Endothelial cell of umbilical vein (primary cell): ENCODE measurements at regions of chr2 and their contacts with region 1.

Region 1: DNA sequence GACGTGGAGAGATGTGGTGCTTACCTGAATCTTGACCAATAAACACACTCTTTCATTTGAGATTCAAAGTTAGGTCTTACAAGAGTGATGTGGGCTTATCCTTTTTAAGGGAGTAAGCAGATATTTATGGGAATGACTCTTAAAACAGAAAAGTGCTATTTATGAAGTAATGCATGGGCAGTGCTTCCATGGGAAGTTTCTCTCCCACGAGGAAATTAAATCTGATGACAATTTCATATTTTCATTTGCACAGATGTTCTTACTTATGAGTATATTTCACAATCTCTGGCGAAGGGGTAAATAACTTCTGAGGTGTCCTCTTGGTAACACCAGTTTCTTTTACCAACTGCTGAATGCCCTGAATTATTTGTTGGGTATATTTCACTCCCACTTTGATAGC is 21.0 kb downstream of the PNPT1 start:
- DNase-seq: no peak
- H3K4me3 ChIP-seq: no peak overlapping the region
- H3K27ac ChIP-seq: no peak overlapping the region
- H3K4me1 ChIP-seq: no peaks in the 10 kb centered on the region
- H3K27me3 ChIP-seq: no peaks in the 10 kb centered on the region
- CTCF ChIP-seq: no peak
- POLR2A ChIP-seq: no peak

Region 2: DNA sequence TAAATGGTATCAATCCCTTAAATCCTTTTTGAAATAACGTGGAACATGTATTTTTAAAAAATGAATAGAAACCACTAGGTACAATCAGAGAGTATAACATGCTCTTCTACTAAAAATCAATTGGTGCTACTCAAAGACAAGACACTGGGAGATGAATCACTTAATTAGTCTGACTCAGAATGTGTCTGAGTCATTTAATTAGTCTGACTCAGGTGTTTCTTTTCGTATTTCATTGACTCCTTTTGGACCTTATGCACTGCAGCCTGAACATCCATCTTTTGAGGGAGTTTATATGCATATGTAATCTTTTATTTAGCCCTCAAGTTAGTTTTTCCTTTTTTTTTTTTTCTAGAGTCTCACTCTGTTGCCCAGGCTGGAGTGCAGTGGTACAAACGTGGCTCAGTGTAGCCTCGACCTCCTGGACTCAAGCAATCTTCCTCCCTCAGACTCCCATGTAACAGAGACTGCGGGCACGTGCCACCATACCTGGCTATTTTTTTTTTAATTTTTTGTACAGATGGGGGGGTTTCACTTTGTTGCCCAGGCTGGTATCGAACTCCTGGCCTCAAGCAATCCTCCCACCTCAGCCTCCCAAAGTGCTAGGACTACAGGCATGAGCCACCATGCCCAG is 81.7 kb before region 1 on chr2:
- CTCF ChIA-PET with region 1: no interaction called
- POLR2A ChIA-PET with region 1: no interaction called
- dilution Hi-C with region 1: no loop called
- intact Hi-C with region 1: no loop called
- DNase-seq: no peak
- H3K4me3 ChIP-seq: no peak overlapping the region
- H3K27ac ChIP-seq: no peak overlapping the region
- H3K4me1 ChIP-seq: peaks cover 8% of the 10 kb centered on the region
- H3K27me3 ChIP-seq: no peaks in the 10 kb centered on the region
- CTCF ChIP-seq: no peak
- POLR2A ChIP-seq: no peak

Region 3: DNA sequence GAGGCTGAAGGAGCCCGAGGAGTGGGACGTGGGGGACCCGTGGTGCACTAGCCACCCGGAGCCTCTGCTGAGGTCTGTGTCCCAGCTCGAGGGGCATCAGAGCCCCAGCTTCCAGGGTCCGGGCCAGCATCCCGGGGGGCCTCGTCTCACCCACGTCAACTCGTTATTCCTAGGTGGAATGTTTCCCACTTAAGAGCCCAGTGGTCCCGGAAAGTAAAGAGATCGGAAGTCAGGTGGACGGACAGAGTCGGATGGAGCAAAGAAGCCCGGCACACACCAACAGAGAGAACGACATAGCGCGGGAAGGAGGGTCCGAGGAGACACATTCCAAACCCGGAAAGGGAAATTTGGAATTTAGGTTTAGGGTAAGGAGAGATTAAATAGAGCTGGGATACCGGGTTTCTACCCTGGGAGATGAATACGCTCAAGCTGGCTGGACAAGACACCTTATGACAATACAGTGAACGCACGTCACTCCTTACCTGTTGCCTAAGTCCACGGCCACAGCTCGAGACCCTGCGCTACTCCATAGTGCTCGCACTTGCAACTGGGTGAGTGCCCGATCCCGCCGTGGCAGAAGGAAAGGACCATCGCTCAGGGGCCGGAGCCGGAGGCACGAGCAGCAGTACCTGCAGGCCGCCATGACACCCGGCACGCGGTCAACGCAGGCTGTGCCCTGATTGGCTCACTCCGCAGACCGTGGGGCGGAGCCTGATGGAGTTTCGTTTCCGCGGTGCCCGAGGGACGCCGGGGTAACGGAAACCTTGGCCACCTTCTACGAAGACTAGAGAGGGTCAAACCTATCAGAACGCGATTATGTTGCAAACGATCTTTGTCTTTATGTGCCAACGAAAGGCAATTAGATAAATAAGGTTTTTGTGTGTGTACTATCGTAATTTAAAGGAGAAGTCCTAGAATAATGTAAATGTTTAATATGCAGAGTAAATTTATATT is 20.8 kb after region 1 on chr2 and contains the start of gene PNPT1:
- CTCF ChIA-PET with region 1: no interaction called
- POLR2A ChIA-PET with region 1: no interaction called
- dilution Hi-C with region 1: no loop called
- intact Hi-C with region 1: no loop called
- DNase-seq: peak; percentile 94
- H3K4me3 ChIP-seq: peak within 1 kb of the TSS; percentile 49 to 83 (median 51)
- H3K27ac ChIP-seq: peak within 1 kb of the TSS; percentile 21
- H3K4me1 ChIP-seq: peaks cover 8% of the 10 kb centered on the region
- H3K27me3 ChIP-seq: peaks cover 2 to 4% of the 10 kb centered on the region in 2 experiments
- CTCF ChIP-seq: no peak
- POLR2A ChIP-seq: peak; percentile 85
- total RNA-seq, gene PNPT1: 32.4 and 34.2 TPM in 2 replicates

Region 4: DNA sequence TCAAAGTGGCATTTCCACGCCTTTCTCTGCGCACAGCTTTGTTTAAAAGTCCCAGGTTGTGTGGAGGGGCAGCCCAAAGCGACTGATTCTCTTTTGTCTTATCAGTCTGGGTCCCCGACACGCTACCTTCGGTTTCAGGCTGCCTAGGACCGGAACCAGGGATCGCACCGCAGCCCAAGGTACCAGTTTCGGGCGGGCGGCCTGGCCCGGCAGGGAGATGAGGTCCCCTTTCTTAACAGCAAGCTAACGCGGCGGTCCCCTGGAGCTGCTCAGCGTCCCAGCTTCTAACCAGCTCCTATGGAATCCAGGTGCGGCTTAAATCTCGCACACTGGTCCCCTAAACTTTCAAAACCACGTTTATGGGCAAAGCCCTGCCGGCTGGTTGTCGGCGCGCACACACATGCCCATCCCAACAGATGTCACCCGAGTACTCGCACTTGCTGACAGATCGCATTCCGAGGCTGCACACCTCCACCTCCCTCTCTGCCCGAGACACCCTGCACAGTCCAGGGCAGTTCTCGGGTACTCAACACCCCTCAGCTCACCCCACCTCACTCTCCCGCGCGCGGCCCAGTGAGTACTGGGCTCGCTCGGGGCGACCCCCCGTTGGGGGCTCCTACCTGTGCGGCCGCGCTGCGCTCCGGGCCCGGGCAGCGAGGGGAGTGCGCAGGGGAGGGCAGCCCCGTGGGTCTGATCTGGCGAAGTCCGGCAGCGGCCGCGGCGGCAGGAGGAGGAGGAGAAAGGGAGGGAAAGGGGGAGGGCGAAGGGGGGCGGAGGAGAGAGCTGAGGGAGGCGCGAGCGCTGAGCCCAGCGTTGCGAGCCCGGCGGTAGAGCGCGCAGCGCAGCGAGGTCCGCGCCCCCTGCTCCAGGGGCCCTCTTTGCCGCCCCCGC is 250.7 kb after region 1 on chr2 and contains the start of gene EFEMP1:
- CTCF ChIA-PET with region 1: no interaction called
- POLR2A ChIA-PET with region 1: no interaction called
- dilution Hi-C with region 1: no loop called
- intact Hi-C with region 1: no loop called
- DNase-seq: peak; percentile 87
- H3K4me3 ChIP-seq: peak within 1 kb of the TSS; percentile 57 to 97 (median 91)
- H3K27ac ChIP-seq: peak within 1 kb of the TSS; percentile 82
- H3K4me1 ChIP-seq: peaks cover 43% of the 10 kb centered on the region
- H3K27me3 ChIP-seq: no peaks in the 10 kb centered on the region
- CTCF ChIP-seq: peak in 1 of 2 donors; percentile 4
- POLR2A ChIP-seq: peak; percentile 96
- total RNA-seq, gene EFEMP1: 2,354 and 2,981 TPM in 2 replicates

Region 5: GRCh38 chr2:55976681-55977080 is 304.1 kb after region 1 on chr2:
- CTCF ChIA-PET with region 1: no interaction called
- POLR2A ChIA-PET with region 1: interaction called, 10 read pairs
- dilution Hi-C with region 1: no loop called
- intact Hi-C with region 1: no loop called
- DNase-seq: no peak
- H3K4me3 ChIP-seq: no peak overlapping the region
- H3K27ac ChIP-seq: no peak overlapping the region
- H3K4me1 ChIP-seq: peaks cover 3% of the 10 kb centered on the region
- H3K27me3 ChIP-seq: no peaks in the 10 kb centered on the region
- CTCF ChIP-seq: no peak
- POLR2A ChIP-seq: no peak